ENCODE measurements at regions of chr14 and their contacts with region 1.

Region 1: DNA sequence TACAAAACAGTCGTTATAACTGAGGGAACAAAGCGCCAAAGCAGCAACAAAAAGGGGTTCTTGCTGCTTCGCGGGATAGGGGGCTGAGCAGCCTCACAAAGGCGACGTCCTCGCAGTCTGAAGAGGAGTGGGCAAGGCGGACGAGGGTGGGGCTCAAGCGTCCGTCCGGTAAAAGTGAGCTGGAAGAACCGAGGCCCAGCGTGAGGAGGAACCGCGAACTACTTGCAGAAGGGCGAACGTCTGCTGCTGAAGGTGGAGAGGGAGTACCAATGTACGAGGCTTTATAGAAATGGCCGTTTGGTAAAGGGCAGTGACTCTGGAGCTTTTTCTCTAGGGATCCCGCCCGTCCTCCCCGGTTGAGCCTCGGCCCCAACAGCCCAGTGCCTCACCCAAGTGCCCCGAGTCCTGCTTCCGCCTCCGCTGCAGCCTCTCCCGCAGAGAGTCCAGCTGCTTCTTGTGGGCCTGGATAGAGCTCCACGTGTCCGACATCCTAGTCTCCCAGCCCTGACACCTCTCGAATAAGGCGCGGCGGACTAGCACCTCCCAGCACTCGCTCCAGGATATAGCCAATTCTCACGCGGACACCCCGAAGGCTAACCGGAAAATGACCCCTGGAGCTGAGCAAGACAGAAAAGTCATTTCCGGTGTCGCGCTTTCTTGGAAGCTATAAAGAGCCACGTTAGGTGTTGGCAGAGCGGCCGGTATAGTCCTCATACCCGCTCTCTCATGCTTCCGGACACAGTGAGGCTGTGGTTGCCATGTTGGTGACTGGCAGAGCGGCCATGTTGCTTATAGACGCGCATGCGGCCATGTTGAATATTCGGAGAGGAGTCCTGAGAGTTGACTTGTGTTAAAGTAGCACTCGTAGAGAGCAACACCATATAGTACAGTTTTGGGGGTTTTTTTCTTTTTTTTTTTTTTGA is at the start of gene METTL3:
- DNase-seq: peak; percentile 99
- ATAC-seq: peak; percentile 99
- H3K4me3 ChIP-seq: peak within 1 kb of the TSS; percentile 68
- H3K27ac ChIP-seq: peak within 1 kb of the TSS; percentile 76
- H3K4me1 ChIP-seq: no peaks in the 10 kb centered on the region
- H3K27me3 ChIP-seq: no peaks in the 10 kb centered on the region
- CTCF ChIP-seq: no peak
- POLR2A ChIP-seq: peak; percentile 71; the same call in 1 of the 2 replicates
- RAD21 ChIP-seq: no peak
- total RNA-seq, gene METTL3: 68.9 and 109 TPM in 2 replicates

Region 2: GRCh38 chr14:21525962-21526671 is 15.1 kb after region 1 on chr14 and contains the start of gene SALL2:
- CTCF ChIA-PET with region 1: interaction called, 11 read pairs
- POLR2A ChIA-PET with region 1: interaction called, 4 read pairs
- dilution Hi-C with region 1: no loop called
- in situ Hi-C with region 1: no loop called
- intact Hi-C with region 1: no loop called
- DNase-seq: peak; percentile 68
- ATAC-seq: peak; percentile 94
- H3K4me3 ChIP-seq: peak within 1 kb of the TSS; percentile 100
- H3K27ac ChIP-seq: peak within 1 kb of the TSS; percentile 66
- H3K4me1 ChIP-seq: peaks cover 3% of the 10 kb centered on the region
- H3K27me3 ChIP-seq: peaks cover 7% of the 10 kb centered on the region
- CTCF ChIP-seq: no peak
- POLR2A ChIP-seq: no peak
- RAD21 ChIP-seq: no peak
- total RNA-seq, gene SALL2: 2.8 and 2.9 TPM in 2 replicates